Activated CD4-positive, alpha-beta T cell treated with anti-CD3 and anti-CD28 coated beads for 36 hours (primary cell): ENCODE measurements at regions of chr1 and their contacts with region 1.

Region 1: DNA sequence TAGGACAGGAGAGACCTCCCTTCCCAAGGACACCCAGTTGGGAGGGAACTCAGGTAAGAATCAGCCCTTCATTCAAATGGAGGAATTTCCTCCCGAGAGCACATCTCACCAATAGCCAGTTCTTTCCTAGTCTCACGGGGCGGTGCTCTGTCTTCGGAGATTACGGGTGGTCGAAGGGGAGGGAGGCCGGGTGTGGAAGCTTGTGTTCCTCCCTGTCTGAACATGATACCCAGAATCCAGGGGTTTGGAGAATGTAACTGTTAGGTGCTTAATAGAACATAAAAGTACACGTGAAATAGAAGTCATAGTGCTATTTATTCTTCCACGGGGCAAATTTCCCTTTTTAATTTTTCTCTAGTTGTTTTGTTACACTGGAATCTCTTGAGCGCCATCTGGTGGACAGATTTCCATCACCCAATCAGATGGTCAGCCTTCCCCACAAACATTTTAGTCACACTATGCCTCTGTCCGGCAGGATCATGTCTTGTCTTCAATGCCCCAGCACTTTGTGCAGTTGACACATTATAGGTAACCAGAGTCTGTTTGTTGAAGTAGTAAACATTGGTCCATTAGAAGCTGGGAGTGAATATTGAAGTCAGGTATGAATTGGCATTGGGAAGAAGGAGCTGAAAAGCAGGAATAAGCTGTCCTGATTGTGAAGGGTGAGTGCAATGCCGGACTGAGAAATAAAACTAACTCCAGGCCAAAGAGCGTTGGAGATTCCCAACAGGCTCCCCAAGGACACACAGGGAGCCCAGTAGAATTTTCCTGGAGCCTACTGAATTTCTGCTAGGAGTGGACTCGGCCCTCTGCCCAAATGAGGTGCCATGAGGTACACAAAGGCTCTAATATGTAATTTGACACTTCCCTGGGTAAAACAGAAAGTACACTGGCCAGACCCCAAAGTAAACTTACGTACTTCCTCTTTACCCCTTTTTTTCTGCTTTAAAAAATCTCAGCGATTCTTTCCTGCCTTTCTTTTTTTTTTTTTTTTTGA is 27.6 kb upstream of the ZNF697 start:
- DNase-seq: peak; percentile 82
- ATAC-seq: peak; percentile 68
- H3K4me3 Mint-ChIP-seq: peak overlapping the region; percentile 32
- H3K27ac Mint-ChIP-seq: no peak overlapping the region
- H3K4me1 Mint-ChIP-seq: no peaks in the 10 kb centered on the region
- H3K27me3 Mint-ChIP-seq: peaks cover 17% of the 10 kb centered on the region

Region 2: DNA sequence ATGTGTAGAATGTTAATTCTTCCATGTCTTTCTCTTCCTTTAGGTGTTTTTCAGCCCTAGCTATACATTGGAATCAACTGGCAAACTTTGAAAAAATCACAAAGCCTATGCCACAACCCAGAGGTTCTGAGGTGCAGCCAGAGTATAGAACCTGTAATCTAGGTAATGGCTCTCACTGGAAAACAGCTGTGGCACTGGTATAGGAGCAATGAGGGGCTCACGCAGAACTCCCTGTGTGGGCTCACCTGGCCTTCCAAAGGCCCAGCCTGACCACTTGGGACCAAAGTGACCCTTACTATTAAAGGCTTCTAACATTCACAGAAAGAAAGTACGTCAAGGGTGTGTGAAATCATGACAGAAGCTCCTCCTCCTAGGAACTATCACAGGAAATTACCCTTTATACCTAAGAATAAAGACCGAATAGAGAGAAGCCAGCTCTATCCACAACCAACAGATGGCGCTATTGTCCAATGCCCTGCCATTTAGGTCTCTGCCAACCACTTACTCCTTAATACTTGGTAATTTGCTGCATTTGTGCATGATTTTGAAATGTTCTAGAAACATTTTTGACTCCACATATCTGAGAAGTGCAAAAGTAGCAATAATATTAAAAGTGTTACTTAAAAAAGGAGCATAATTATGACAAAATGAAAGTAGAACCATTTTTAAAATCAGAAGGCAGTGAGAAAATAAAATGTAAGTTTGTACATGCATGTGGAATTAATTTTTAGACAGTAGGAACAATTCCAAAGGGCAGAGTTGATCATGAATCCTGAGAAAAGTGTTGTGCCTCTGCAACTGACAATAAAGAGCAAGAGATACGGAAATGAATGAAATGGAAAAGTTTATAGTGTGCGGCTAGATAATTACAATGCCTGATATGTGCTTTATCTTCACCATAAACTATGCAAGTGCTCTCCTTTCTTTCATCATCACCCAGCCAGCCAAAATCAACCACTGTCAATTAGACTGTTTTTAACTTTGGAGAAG is 400.2 kb before region 1 on chr1:
- CTCF ChIA-PET with region 1: interaction called, 3 read pairs
- POLR2A ChIA-PET with region 1: no interaction called
- intact Hi-C with region 1: loop called in 1 of 2 experiments (anchors 10 kb)
- DNase-seq: peak; percentile 66
- ATAC-seq: peak; percentile 74
- H3K4me3 Mint-ChIP-seq: no peak overlapping the region
- H3K27ac Mint-ChIP-seq: no peak overlapping the region
- H3K4me1 Mint-ChIP-seq: no peaks in the 10 kb centered on the region
- H3K27me3 Mint-ChIP-seq: peaks cover 5% of the 10 kb centered on the region

Region 3: DNA sequence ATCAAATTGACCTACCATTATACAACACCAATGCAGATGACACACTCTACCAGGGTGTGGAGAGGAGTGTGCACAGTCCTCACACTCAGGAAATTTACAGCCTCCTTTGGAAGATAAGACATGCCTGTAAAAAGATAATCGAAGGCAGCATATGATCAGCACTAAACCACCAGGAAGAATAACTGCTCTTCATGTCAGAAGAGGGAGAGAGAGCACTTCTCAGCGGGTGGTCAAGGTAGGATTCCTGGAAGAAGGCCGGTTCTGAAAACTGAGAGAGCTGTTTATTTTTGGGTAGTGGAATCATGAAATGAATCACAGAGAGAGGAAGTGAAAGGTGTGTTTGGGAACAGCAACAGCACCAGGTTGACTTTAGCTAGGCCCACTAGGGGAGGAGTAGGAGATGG is 13.6 kb before region 1 on chr1:
- CTCF ChIA-PET with region 1: interaction called, 29 read pairs
- POLR2A ChIA-PET with region 1: no interaction called
- intact Hi-C with region 1: no loop called
- DNase-seq: no peak
- ATAC-seq: no peak
- H3K4me3 Mint-ChIP-seq: no peak overlapping the region
- H3K27ac Mint-ChIP-seq: no peak overlapping the region
- H3K4me1 Mint-ChIP-seq: peaks cover 4% of the 10 kb centered on the region
- H3K27me3 Mint-ChIP-seq: peaks cover 16% of the 10 kb centered on the region